Endothelial cell of umbilical vein (primary cell): ENCODE measurements at regions of chr3 and their contacts with region 1.

Region 1: DNA sequence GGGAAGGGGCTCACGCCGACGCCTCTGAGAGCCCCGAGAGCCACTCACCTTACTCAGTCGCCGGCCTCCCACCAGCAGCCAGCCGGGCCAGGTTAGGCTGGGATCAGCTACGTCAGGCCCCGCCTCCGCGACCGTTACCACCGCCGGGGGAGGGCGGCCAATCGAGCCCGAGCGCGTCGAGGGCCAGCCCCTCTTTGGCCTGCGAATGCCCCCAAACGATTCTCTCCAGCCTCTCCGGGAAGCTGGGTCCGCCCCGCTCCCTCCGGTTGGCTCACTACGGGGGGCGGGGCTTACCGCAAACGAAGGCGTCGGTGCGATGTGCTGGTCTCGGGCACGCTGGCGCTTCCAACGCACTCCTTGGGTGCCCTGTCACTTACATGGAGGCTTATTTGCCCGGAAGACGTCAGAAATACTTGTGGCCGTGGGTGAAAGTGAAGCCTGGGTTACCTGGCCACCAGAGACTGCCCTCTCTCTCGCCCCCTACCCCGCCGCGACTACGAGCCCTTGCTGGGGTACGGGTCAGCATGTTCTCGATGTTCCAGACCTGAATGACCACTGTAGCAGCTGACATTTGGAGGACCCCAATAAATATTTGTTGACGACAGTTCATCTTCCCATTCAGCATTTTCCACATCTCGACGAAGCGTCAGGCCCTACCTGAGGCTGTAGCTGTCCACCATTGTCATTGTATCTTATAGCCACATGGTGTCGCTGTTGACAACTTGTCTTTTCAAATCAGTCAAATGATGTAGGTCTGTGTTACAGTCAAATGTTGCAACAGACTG is at the start of gene CEP70:
- DNase-seq: peak; percentile 96
- H3K4me3 ChIP-seq: peak within 1 kb of the TSS; percentile 56 to 92 (median 63)
- H3K27ac ChIP-seq: peak within 1 kb of the TSS; percentile 46
- H3K4me1 ChIP-seq: no peaks in the 10 kb centered on the region
- H3K27me3 ChIP-seq: no peaks in the 10 kb centered on the region
- CTCF ChIP-seq: peak; percentile 72 to 84
- POLR2A ChIP-seq: peak; percentile 69
- total RNA-seq, gene CEP70: 14.7 and 16.9 TPM in 2 replicates

Region 2: GRCh38 chr3:138180375-138181029 is 413.8 kb before region 1 on chr3:
- CTCF ChIA-PET with region 1: no interaction called
- POLR2A ChIA-PET with region 1: no interaction called
- dilution Hi-C with region 1: no loop called
- intact Hi-C with region 1: loop called (anchors 1 kb)
- DNase-seq: peak; percentile 50
- H3K4me3 ChIP-seq: no peak overlapping the region
- H3K27ac ChIP-seq: no peak overlapping the region
- H3K4me1 ChIP-seq: no peaks in the 10 kb centered on the region
- H3K27me3 ChIP-seq: peaks cover 7 to 13% of the 10 kb centered on the region in 2 experiments
- CTCF ChIP-seq: peak; percentile 19 to 21
- POLR2A ChIP-seq: no peak

Region 3: GRCh38 chr3:138417559-138417982 is 176.8 kb before region 1 on chr3:
- CTCF ChIA-PET with region 1: interaction called, 6 read pairs
- POLR2A ChIA-PET with region 1: no interaction called
- dilution Hi-C with region 1: no loop called
- intact Hi-C with region 1: loop called (anchors 1 kb)
- DNase-seq: peak; percentile 64
- H3K4me3 ChIP-seq: no peak overlapping the region
- H3K27ac ChIP-seq: no peak overlapping the region
- H3K4me1 ChIP-seq: no peaks in the 10 kb centered on the region
- H3K27me3 ChIP-seq: peaks cover 0 to 5% of the 10 kb centered on the region in 2 experiments
- CTCF ChIP-seq: peak; percentile 89 to 92
- POLR2A ChIP-seq: no peak

Region 4: DNA sequence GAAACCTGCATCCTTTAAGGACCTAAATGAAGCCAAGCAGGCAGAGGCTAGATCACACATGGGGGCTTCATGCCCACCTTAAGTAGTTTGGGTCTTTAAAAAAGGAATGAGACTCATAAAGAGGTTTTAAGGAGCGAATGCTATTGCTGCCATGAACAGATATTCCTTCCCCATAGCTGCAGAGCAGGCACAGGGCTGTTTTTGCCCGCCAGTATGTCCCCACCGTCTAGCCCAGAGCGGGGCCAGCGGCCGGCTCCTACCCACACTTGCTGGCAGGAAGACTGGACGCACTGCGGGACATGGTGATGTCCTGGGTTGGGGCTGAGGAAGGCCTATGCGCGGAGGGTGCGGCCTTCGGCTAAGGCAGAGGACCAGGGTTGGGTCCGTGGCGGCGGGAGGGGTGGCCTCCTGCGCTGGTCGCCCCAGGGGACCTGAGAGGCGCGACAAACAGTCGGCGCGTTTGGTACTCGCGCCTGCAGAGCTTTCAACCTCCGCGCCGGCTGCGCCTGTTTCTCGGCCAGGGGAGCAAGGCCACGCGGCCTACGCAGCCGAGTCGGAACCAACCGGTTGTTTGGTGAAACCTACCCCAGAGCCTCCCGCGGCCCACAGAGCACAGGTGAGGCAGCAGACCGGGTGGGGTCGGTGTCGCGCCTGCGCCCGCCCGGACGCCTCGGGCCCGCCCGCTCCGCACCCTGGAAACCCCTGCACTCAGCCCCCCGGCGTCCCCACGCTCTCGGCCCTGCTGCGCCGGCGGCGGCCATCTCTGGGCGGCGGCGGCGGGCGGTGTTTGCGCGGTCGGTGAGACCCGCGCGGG is 14.2 kb after region 1 on chr3 and contains the start of gene FAIM:
- CTCF ChIA-PET with region 1: interaction called, 12 read pairs
- POLR2A ChIA-PET with region 1: interaction called, 7 read pairs
- dilution Hi-C with region 1: no loop called
- intact Hi-C with region 1: loop called (anchors 1 kb)
- DNase-seq: peak; percentile 77
- H3K4me3 ChIP-seq: peak within 1 kb of the TSS; percentile 45 to 86 (median 69)
- H3K27ac ChIP-seq: peak within 1 kb of the TSS; percentile 66
- H3K4me1 ChIP-seq: peaks cover 4% of the 10 kb centered on the region
- H3K27me3 ChIP-seq: no peaks in the 10 kb centered on the region
- CTCF ChIP-seq: no peak
- POLR2A ChIP-seq: peak; percentile 10
- total RNA-seq, gene FAIM: 9.9 and 11.9 TPM in 2 replicates

Region 5: GRCh38 chr3:138834359-138835212 is 240.2 kb after region 1 on chr3 and contains the start of gene PIK3CB:
- CTCF ChIA-PET with region 1: no interaction called
- POLR2A ChIA-PET with region 1: no interaction called
- dilution Hi-C with region 1: no loop called
- intact Hi-C with region 1: loop called (anchors 1 kb)
- DNase-seq: peak; percentile 85
- H3K4me3 ChIP-seq: peak within 1 kb of the TSS; percentile 65 to 82 (median 80)
- H3K27ac ChIP-seq: peak within 1 kb of the TSS; percentile 91
- H3K4me1 ChIP-seq: peaks cover 16% of the 10 kb centered on the region
- H3K27me3 ChIP-seq: no peaks in the 10 kb centered on the region
- CTCF ChIP-seq: peak; percentile 11 to 41
- POLR2A ChIP-seq: peak; percentile 87
- total RNA-seq, gene PIK3CB: 28.4 and 29.8 TPM in 2 replicates

Region 6: DNA sequence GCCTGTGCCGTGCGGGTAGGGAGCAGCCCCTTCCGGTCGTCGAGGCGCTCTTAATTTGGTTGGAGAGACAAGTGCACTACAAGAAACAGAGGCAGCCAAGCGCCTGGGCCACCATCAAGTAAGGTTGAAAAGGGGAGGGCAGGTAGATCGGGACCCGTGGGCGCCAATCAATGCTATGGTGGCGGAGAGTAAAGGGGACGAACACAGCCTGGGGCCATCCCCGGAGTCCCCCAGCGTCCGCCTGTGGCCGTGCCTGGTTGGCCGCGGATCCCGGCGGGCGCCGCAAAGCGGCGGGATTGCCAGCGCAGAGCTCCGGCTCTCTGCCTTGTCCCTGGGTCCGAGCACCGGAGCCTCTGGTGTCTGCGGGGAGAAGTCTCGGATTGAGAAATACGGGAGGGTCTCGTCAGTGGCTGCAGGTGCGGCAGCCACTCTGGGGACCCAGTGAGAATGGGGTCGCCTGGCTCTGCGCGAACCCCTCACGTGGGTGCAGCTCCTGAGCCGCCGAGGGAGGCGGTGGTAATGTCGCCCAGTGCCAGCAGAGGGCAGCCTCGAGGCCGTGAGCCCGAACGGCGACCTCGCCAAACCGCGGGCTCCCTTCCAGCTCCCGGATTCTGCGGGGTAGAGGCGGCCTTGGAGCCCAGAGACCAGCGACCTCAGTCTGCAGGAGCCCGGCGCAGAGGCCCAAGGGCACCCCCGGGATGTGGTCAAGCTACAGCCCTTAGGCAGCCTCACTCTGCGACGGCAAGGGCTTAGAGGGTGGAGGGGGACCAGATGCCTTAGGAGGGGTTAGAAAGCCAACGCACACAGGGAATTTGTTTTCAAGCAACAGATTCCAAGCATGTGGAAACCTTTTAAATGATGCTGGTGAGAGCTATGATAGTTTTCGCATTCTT is 341.8 kb after region 1 on chr3:
- CTCF ChIA-PET with region 1: interaction called, 31 read pairs
- POLR2A ChIA-PET with region 1: no interaction called
- dilution Hi-C with region 1: no loop called
- intact Hi-C with region 1: loop called (anchors 1 kb)
- DNase-seq: peak; percentile 59
- H3K4me3 ChIP-seq: peak overlapping the region in 2 of 3 experiments; percentile 0 to 25
- H3K27ac ChIP-seq: no peak overlapping the region
- H3K4me1 ChIP-seq: peaks cover 7% of the 10 kb centered on the region
- H3K27me3 ChIP-seq: peaks cover 54 to 66% of the 10 kb centered on the region in 2 experiments
- CTCF ChIP-seq: peak; percentile 84 to 94
- POLR2A ChIP-seq: no peak

Region 7: GRCh38 chr3:139329345-139329850 is 735.1 kb after region 1 on chr3:
- CTCF ChIA-PET with region 1: interaction called, 4 read pairs
- POLR2A ChIA-PET with region 1: no interaction called
- dilution Hi-C with region 1: no loop called
- intact Hi-C with region 1: loop called (anchors 1 kb)
- DNase-seq: peak; percentile 74
- H3K4me3 ChIP-seq: no peak overlapping the region
- H3K27ac ChIP-seq: no peak overlapping the region
- H3K4me1 ChIP-seq: peaks cover 3% of the 10 kb centered on the region
- H3K27me3 ChIP-seq: peaks cover 2 to 15% of the 10 kb centered on the region in 2 experiments
- CTCF ChIP-seq: peak; percentile 99
- POLR2A ChIP-seq: no peak